ENCODE measurements at regions of chr1 and their contacts with region 1.

Region 1: GRCh38 chr1:162561037-162561616 is 395 bp upstream of the UAP1 start:
- DNase-seq: peak; percentile 96
- H3K4me3 Mint-ChIP-seq: peak overlapping the region; percentile 87
- H3K27ac Mint-ChIP-seq: peak overlapping the region; percentile 93
- H3K4me1 Mint-ChIP-seq: peaks cover 49% of the 10 kb centered on the region
- H3K27me3 Mint-ChIP-seq: no peaks in the 10 kb centered on the region

Region 2: DNA sequence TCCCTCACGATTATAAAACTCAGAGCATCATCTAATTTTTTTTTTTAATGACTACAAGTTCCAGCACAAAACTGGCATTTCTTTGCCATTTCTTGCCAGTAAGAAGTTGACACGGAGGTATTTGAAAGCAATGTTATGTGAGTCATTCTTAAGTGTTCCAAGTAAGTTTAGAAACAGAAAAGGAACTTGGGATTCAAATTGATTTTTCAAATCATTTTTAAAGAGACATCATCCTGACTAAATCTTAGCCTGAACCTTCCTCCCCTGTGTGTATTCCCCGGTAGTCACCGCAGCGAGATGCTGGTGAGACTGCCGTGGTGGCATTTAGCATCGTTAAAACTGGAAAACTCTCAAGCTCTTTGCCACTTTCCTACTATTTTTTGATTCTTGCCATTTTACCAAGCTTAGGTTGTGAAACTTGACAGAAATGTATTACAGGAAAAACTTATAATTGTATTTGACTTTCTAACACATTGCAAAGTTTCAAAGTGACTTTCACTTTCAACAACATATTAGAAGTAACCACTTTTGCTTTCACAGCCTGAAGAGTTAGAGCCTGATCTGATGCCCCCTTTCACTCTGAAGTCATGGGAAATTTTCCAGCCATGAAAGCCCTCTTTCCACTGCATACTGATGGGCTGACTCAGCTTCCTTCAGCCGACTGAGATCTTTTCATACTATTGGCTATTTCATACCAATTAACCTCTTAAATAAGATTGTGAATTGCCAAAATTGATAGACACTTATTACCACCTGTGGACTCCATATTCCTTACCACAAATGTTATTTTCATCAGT is 598.8 kb before region 1 on chr1:
- intact Hi-C with region 1: loop called (anchors 1 kb)
- DNase-seq: peak; percentile 5
- H3K4me3 Mint-ChIP-seq: peak overlapping the region; percentile 77
- H3K27ac Mint-ChIP-seq: peak overlapping the region; percentile 89
- H3K4me1 Mint-ChIP-seq: peaks cover 19% of the 10 kb centered on the region
- H3K27me3 Mint-ChIP-seq: no peaks in the 10 kb centered on the region

Region 3: GRCh38 chr1:162069328-162070093 is 491.6 kb before region 1 on chr1 and contains the start of gene NOS1AP:
- intact Hi-C with region 1: loop called (anchors 2 kb)
- DNase-seq: peak; percentile 72
- H3K4me3 Mint-ChIP-seq: peak within 1 kb of the TSS; percentile 80
- H3K27ac Mint-ChIP-seq: no peak within 1 kb of the TSS
- H3K4me1 Mint-ChIP-seq: no peaks in the 10 kb centered on the region
- H3K27me3 Mint-ChIP-seq: peaks cover 49% of the 10 kb centered on the region
- total RNA-seq, gene NOS1AP: 0.10 TPM in 1 of 2 replicates, not detected in the other

Region 4: GRCh38 chr1:163321311-163322305 is 760.5 kb after region 1 on chr1 and contains the start of gene NUF2:
- intact Hi-C with region 1: loop called (anchors 1 kb)
- DNase-seq: peak; percentile 97
- H3K4me3 Mint-ChIP-seq: peak within 1 kb of the TSS; percentile 92
- H3K27ac Mint-ChIP-seq: peak within 1 kb of the TSS; percentile 98
- H3K4me1 Mint-ChIP-seq: peaks cover 52% of the 10 kb centered on the region
- H3K27me3 Mint-ChIP-seq: peaks cover 3% of the 10 kb centered on the region
- total RNA-seq, gene NUF2: 36.8 and 37.7 TPM in 2 replicates

Measured in activated T-helper 1 cell treated with anti-CD3 and anti-CD28 coated beads, Interleukin-12 subunit alpha, Interleukin-12 subunit beta, Interleukin-2, Interleukin-4 antibody, amounts not matched to agents 30 ng/mL and 10 ng/mL and 1 ng/mL, durations not matched to agents 14 hours and 24 hours and 36 hours (primary cell).